Natural killer cell (primary cell): ENCODE measurements at regions of chr19 and their contacts with region 1.

Region 1: DNA sequence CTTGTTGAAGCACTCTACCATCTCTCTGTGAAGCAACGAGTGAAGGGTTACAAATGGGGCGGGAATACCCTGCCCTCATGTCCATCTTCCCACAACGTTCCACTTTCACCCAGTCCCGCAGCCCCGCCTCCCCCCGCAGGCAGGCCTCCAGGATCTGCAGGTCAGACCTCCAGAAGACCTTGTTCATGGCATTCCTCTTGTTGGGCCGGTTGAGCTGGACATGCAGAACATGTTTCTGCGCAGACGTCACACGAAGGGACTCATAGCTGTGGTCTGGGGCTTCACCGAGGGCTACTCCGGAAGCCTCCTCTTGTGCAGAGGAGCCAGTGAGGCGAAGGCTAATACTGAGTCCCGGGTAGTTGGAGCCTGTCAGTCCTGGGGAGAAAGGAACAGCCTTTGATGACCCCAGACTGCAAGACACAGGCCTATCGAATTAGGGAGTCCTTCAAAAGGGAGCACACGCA is 420 bp downstream of the ECH1 start:
- DNase-seq: no peak
- ATAC-seq: peak; percentile 39 to 52 (median 43)
- H3K4me3 ChIP-seq: peak overlapping the region; percentile 64
- H3K4me3 Mint-ChIP-seq: peak overlapping the region; percentile 97
- H3K27ac ChIP-seq: peak overlapping the region; percentile 69
- H3K27ac Mint-ChIP-seq: peak overlapping the region; percentile 93 to 95
- H3K4me1 ChIP-seq: peaks cover 16% of the 10 kb centered on the region
- H3K4me1 Mint-ChIP-seq: peaks cover 14 to 22% of the 10 kb centered on the region in 2 donors
- H3K27me3 ChIP-seq: no peaks in the 10 kb centered on the region
- H3K27me3 Mint-ChIP-seq: no peaks in the 10 kb centered on the region
- CTCF ChIP-seq: no peak

Region 2: DNA sequence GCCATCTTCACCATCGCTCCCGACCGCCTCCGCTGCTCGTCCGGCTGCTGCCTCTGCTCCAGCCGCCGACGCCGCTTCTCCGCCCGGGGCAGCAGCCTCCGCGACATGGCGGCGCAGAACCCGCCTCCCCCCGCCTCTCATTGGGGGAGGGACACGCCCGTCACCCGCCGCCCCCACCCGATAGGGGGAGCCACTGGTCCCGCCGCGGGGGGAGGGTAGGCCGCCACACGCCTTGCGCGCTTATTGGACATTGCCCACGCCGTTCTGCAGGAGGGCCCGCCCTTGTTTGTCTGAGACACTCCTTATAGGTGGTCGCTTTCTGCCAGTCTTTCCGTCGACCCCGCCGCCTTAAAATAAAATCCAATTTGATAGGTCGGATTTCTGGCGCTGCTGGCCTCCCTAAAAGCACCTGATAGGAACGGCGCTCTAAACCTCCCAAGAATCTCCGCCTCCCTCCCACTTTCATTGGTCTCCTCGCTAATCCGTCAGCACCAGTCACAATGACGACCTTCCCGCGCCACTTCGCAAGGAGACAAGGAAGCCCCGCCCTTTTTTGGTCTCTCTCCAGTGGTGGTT is 18.8 kb after region 1 on chr19 and contains the start of gene HNRNPL:
- intact Hi-C with region 1: loop called (anchors 1 kb)
- DNase-seq: peak in 1 of 2 donors; percentile 98
- ATAC-seq: peak; percentile 58 to 85 (median 69)
- H3K4me3 ChIP-seq: peak within 1 kb of the TSS; percentile 84
- H3K4me3 Mint-ChIP-seq: peak within 1 kb of the TSS; percentile 96
- H3K27ac ChIP-seq: peak within 1 kb of the TSS; percentile 97
- H3K27ac Mint-ChIP-seq: peak within 1 kb of the TSS; percentile 99 to 100
- H3K4me1 ChIP-seq: peaks cover 61% of the 10 kb centered on the region
- H3K4me1 Mint-ChIP-seq: peaks cover 59 to 69% of the 10 kb centered on the region in 2 donors
- H3K27me3 ChIP-seq: no peaks in the 10 kb centered on the region
- H3K27me3 Mint-ChIP-seq: no peaks in the 10 kb centered on the region
- CTCF ChIP-seq: peak; percentile 26
- total RNA-seq, gene HNRNPL: 636 to 800 (median 702) TPM